Calu3 (cell line): ENCODE measurements at regions of chr2 and their contacts with region 1.

Region 1: GRCh38 chr2:31831585-31831984 is 179.2 kb downstream of the MEMO1 start:
- DNase-seq: no peak
- H3K4me3 Mint-ChIP-seq: no peak overlapping the region
- H3K27ac Mint-ChIP-seq: no peak overlapping the region
- H3K4me1 Mint-ChIP-seq: no peaks in the 10 kb centered on the region
- H3K27me3 Mint-ChIP-seq: no peaks in the 10 kb centered on the region
- CTCF ChIP-seq: no peak

Region 2: DNA sequence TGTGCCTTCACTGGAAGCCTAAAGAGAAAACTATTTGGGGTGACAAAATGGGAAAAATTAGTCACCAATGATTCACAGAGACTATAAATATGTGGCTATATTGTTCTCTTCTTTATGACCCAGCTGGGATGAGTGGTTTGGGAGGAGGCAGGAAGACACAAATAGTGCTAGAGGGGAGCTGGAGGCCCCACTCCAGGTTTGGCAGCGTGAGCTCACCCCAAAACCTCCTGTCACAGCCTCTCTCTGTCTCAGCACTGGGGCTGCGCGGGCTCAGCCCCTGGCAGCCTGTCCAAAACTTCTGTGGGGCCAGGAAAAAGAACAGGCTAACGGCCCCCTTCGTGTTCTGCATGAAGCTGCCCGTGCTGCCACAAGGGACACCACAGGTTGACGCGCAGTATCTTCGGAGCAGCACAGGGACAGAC is 1457.7 kb before region 1 on chr2:
- CTCF ChIA-PET with region 1: no interaction called
- intact Hi-C with region 1: no loop called
- DNase-seq: no peak
- H3K4me3 Mint-ChIP-seq: no peak overlapping the region
- H3K27ac Mint-ChIP-seq: no peak overlapping the region
- H3K4me1 Mint-ChIP-seq: no peaks in the 10 kb centered on the region
- H3K27me3 Mint-ChIP-seq: peaks cover 56% of the 10 kb centered on the region
- CTCF ChIP-seq: no peak

Region 3: DNA sequence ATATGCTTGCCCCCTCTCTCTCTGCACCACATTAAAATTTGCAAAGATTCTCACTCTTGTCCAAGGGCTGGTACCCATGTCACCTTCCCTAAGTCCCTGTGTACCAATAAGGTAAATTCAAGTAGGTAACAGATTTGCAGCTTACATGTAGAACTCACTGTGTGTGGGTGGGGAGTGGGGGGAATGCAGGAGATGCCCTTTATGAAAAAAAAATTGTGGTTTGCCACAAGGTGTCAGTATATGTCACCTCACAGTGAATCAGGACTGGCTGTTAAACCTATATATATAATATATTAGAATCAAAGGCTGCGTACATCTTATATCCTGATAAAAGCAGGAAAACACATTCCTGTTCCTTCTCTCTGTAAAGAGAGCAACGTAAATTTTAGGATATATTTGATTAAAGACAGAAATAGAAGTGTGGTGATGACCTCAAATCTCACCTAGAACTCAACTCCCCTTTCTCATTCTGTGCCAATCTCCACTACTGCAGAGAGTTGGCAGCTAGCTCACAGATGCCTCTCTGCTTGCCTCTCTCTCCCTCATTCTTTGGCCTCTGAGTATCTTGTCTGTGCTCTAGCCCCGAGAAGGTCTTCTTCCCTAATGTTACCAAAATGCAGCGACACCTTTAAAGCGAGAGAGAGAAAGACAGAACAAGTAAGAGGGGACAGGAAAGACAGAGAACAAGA is 417.6 kb before region 1 on chr2:
- CTCF ChIA-PET with region 1: no interaction called
- intact Hi-C with region 1: loop called (anchors 10 kb)
- DNase-seq: no peak
- H3K4me3 Mint-ChIP-seq: peak overlapping the region; percentile 67
- H3K27ac Mint-ChIP-seq: peak overlapping the region; percentile 86
- H3K4me1 Mint-ChIP-seq: peaks cover 41% of the 10 kb centered on the region
- H3K27me3 Mint-ChIP-seq: no peaks in the 10 kb centered on the region
- CTCF ChIP-seq: peak; percentile 51

Region 4: DNA sequence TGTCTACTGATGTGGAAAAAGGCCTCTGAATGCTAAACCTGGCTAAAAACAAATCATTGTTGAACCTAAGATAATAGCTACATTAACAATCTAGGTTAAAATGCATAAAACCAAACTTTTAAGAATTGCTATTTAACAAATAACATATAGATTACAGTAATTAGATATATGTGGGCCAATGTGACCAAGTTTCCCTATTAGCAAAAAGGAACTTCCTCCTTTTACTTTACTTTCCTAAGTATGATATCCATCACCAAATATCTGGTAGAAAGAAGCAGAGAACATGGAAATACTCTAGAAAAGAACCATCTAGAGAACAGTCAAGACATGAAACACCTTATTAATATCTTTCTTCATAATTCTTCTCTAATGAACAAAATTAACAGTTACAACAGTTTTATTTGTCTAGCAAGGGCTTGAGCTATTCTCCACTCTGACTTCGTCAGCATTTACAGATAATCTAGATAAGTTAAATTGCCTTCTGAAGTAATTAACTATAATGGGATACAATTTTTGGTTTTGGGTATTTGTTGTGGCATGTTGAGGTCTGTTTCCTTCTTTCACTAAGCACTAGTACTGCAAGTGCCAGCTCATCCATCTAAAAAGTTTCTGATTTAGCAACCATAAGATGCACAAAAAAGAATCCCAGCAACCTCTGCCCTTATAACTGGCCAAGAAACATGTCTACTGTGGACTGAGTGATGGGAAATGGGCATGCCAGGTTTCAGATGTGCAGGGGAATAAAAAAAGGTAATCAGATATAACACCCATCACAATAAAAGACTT is 126.0 kb after region 1 on chr2:
- CTCF ChIA-PET with region 1: no interaction called
- intact Hi-C with region 1: no loop called
- DNase-seq: no peak
- H3K4me3 Mint-ChIP-seq: no peak overlapping the region
- H3K27ac Mint-ChIP-seq: no peak overlapping the region
- H3K4me1 Mint-ChIP-seq: peaks cover 18% of the 10 kb centered on the region
- H3K27me3 Mint-ChIP-seq: no peaks in the 10 kb centered on the region
- CTCF ChIP-seq: no peak

Region 5: GRCh38 chr2:32812316-32812715 is 980.7 kb after region 1 on chr2:
- CTCF ChIA-PET with region 1: no interaction called
- intact Hi-C with region 1: no loop called
- DNase-seq: no peak
- H3K4me3 Mint-ChIP-seq: no peak overlapping the region
- H3K27ac Mint-ChIP-seq: peak overlapping the region; percentile 9
- H3K4me1 Mint-ChIP-seq: peaks cover 20% of the 10 kb centered on the region
- H3K27me3 Mint-ChIP-seq: no peaks in the 10 kb centered on the region
- CTCF ChIP-seq: no peak